Activated T-helper 2 cell treated with anti-CD3 and anti-CD28 coated beads, Interferon-gamma antibody, Interleukin-2, Interleukin-4, amounts not matched to agents 10 μg/mL and 5 μg/mL and 100 μg/mL, durations not matched to agents 14 hours and 24 hours and 36 hours (primary cell): ENCODE measurements at regions of chr12 and their contacts with region 1.

Region 1: GRCh38 chr12:55142669-55143565 is 16.7 kb downstream of the OR9K2 start:
- DNase-seq: no peak
- H3K4me3 Mint-ChIP-seq: no peak overlapping the region
- H3K27ac Mint-ChIP-seq: no peak overlapping the region
- H3K4me1 Mint-ChIP-seq: no peaks in the 10 kb centered on the region
- H3K27me3 Mint-ChIP-seq: peaks cover 19% of the 10 kb centered on the region

Region 2: DNA sequence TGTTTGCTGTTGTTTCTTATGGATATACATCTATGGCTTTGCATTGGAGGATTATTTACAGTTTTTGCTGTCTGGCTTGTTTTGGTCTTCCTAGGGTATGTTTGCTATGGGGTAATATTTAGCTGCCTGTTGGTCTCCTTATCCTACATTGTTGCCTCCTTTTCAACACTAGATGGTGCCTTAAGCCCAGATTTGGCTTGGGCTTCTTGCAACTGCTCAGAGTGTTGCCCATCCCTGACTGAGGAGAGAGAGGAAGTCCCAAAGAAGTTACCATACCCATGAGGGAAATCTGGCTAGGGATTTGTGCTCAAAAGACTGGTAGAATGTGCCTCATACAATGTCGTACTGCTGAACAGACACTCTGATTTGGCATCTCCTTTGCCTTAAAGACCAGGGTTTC is 383.2 kb before region 1 on chr12:
- intact Hi-C with region 1: loop called (anchors 10 kb)
- DNase-seq: no peak
- H3K4me3 Mint-ChIP-seq: no peak overlapping the region
- H3K27ac Mint-ChIP-seq: no peak overlapping the region
- H3K4me1 Mint-ChIP-seq: peaks cover 2% of the 10 kb centered on the region
- H3K27me3 Mint-ChIP-seq: peaks cover 16% of the 10 kb centered on the region

Region 3: DNA sequence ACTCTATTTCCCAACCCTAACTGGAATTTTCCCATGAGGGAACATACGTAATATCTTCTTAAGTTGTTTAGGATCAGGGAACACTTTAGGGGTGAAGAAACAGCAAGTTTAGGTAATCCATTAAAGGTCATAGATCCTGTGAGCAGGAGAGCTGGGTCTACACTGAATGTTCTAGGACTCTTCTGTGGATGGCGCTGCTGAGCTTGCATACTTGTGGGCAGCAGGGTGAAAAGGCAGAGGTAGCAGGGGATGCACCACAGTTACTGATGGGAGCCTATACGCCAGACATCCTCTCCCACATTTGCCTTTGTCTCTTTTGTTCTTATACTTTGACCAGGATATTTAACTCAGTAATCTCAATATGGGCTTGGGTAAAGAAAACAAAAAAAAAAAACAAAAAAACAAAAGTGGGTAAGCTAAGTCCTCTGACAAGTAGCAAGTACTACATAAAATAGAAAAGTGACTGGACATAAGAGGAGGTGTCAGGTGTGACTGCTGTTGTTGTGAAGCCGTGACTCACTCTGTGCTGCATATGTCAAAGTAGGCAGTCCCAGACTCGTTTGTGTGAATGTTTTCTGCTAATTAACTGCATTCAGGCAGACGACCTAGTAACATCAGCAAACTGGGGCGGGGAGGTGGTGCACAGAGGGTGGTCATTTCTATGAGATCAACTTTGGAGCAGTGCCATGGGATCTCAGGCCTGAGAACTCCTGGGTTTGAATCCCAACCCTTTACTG is 91.6 kb before region 1 on chr12:
- intact Hi-C with region 1: no loop called
- DNase-seq: no peak
- H3K4me3 Mint-ChIP-seq: no peak overlapping the region
- H3K27ac Mint-ChIP-seq: no peak overlapping the region
- H3K4me1 Mint-ChIP-seq: no peaks in the 10 kb centered on the region
- H3K27me3 Mint-ChIP-seq: peaks cover 20% of the 10 kb centered on the region